ENCODE measurements at regions of chr1 and their contacts with region 1.

Region 1: DNA sequence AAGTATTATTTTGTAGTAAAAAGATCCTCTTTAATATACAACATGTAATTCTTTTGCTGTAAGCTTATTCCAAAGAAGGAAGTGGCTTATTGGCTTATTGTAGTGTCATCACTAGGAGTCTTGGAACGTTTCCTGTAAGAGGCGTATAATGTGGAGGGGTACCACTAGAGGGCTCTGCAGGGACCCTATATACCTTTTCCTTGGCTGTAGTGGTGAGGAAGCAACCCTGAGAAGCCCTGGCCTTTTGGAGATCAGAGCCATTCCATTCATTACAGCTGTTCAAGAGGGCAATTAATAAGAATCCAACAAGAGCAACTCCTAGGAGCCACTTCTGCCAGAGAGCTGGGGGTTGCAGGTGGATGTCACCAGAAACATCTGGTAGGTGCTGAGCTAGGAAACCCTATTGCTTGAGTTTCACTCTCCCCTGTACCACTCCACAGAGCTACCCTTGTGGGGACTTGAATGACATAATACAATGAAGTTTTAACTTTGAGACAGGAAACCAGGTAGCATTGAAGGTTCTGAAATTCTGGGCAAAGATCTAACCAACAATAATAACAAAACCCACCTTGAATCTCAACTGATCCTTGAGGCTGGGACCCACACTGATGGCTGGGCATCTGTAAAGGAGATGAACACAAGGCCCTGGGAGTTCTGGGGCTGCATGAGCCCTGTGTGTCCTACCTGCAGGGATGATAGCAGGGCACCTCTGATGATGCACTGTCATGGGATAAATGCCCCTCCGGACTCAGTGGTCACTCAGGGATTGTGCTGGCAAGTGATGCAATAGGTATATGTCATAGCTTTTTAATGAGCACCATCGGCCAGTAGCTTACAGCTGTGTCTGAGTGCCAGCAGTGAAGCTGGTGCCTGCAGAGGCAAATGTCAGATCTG is 160.2 kb upstream of the COA6 start:
- DNase-seq: peak; percentile 28
- ATAC-seq: peak; percentile 55
- H3K4me3 ChIP-seq: no peak overlapping the region
- H3K27ac ChIP-seq: no peak overlapping the region
- H3K4me1 ChIP-seq: peaks cover 34% of the 10 kb centered on the region
- H3K27me3 ChIP-seq: no peaks in the 10 kb centered on the region
- CTCF ChIP-seq: peak; percentile 68 to 72 (median 68)
- EP300 ChIP-seq: no peak
- POLR2A ChIP-seq: no peak
- RAD21 ChIP-seq: peak; percentile 79

Region 2: DNA sequence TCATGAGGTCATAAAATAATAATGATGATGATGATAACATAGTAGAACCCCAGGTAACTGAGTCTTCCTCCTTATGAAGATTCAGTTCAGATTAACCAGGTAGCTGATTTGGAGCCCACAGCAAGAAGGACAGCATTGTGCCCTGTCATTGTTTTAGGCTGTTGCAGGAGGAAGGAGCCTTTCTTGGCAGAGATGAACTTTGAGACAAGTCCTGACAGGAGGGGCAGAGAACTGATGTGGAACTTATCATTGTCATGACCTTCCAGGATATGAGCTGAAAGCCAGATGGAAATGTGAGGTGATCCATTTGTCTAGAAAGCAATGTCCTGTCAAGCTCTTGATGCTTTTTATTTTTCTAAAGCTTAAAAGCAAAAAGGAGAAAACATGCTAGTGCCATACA is 27.7 kb after region 1 on chr1:
- CTCF ChIA-PET with region 1: interaction called, 13 read pairs
- POLR2A ChIA-PET with region 1: no interaction called
- RAD21 ChIA-PET with region 1: interaction called, 7 read pairs
- SMC1A ChIA-PET with region 1: interaction called, 86 read pairs
- in situ Hi-C with region 1: no loop called
- intact Hi-C with region 1: no loop called
- DNase-seq: no peak
- ATAC-seq: no peak
- H3K4me3 ChIP-seq: no peak overlapping the region
- H3K27ac ChIP-seq: no peak overlapping the region
- H3K4me1 ChIP-seq: peaks cover 22% of the 10 kb centered on the region
- H3K27me3 ChIP-seq: no peaks in the 10 kb centered on the region
- CTCF ChIP-seq: no peak
- EP300 ChIP-seq: no peak
- POLR2A ChIP-seq: no peak
- RAD21 ChIP-seq: no peak

Region 3: DNA sequence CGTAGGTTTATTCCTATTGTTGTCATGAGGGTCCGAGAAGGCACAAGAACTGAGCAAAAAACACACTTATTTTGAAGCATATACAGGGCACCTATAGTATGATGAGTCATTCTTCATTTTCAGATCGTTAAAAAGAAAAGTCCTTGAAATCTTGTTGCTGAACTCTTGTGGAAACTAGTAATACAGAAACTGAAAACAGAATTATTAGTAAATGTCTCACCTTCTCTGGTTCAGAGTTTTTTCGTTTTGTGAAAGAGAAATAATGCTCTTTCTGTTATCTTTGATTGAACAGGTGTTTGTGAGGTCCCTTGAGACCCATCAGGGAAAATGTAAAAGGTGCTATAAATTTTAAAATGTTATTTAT is 58.2 kb after region 1 on chr1:
- CTCF ChIA-PET with region 1: interaction called, 11 read pairs
- POLR2A ChIA-PET with region 1: no interaction called
- RAD21 ChIA-PET with region 1: interaction called, 5 read pairs
- SMC1A ChIA-PET with region 1: interaction called, 3 read pairs
- in situ Hi-C with region 1: no loop called
- intact Hi-C with region 1: loop called (anchors 2 kb)
- DNase-seq: peak; percentile 89
- ATAC-seq: peak; percentile 96
- H3K4me3 ChIP-seq: no peak overlapping the region
- H3K27ac ChIP-seq: peak overlapping the region; percentile 90
- H3K4me1 ChIP-seq: peaks cover 20% of the 10 kb centered on the region
- H3K27me3 ChIP-seq: no peaks in the 10 kb centered on the region
- CTCF ChIP-seq: no peak
- EP300 ChIP-seq: peak; percentile 97 to 99
- POLR2A ChIP-seq: no peak
- RAD21 ChIP-seq: no peak

Region 4: GRCh38 chr1:234326497-234327366 is 113.7 kb after region 1 on chr1:
- CTCF ChIA-PET with region 1: interaction called, 29 read pairs
- POLR2A ChIA-PET with region 1: no interaction called
- RAD21 ChIA-PET with region 1: interaction called, 4 read pairs
- SMC1A ChIA-PET with region 1: interaction called, 15 read pairs
- in situ Hi-C with region 1: loop called (anchors 25 kb)
- intact Hi-C with region 1: loop called (anchors 1 kb)
- DNase-seq: no peak
- ATAC-seq: peak; percentile 92
- H3K4me3 ChIP-seq: no peak overlapping the region
- H3K27ac ChIP-seq: no peak overlapping the region
- H3K4me1 ChIP-seq: peaks cover 5% of the 10 kb centered on the region
- H3K27me3 ChIP-seq: no peaks in the 10 kb centered on the region
- CTCF ChIP-seq: peak; percentile 77 to 87 (median 86)
- EP300 ChIP-seq: no peak
- POLR2A ChIP-seq: no peak
- RAD21 ChIP-seq: peak; percentile 76

Measured in GM12878 (cell line).